KBM-7 (cell line): ENCODE measurements at regions of chr17 and their contacts with region 1.

Region 1: DNA sequence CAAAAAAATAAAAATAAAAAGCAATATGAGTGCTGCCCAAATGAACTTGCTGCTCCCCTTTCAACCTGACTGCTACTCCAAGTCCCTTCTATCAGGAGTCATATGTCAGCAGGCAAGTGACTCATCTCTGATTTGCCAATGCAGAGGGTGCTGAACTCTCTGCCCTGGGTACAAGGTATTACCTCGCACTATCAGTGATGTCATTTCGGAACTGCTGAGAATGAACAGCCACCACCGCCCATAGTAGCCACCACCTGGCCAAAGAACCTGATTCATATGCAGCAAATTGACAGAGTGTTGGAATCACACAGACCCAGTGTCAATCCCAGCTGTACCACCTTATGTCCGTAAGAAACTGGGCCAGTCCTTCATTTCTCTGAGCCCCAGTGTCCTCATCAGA is 31.2 kb downstream of the LYRM9 start:
- DNase-seq: no peak

Region 2: GRCh38 chr17:27654654-27655524 is 207.1 kb before region 1 on chr17:
- in situ Hi-C with region 1: loop called (anchors 25 kb)
- DNase-seq: peak; percentile 92

Region 3: GRCh38 chr17:27778193-27778592 is 83.8 kb before region 1 on chr17:
- in situ Hi-C with region 1: no loop called
- DNase-seq: no peak

Region 4: DNA sequence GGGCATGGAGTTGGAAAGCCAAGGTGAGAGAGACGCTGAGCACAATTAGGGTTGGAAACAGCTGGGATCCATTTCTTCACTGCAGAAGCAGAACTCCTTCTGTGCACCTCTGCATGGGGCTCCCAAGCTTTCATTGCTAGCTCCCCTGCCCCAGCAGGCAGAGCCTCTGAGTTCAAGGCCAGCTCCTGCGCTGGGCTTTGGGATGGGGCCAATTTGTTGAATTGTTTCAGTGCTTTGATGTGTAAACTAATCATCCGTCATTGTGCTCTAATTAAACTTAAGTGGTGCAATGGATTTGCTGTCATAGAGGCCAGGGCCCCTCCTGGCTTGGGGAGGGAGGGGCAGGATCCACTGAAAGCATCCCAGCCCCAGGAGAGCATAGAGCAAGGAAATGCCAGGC is 44.6 kb after region 1 on chr17:
- in situ Hi-C with region 1: no loop called
- DNase-seq: no peak

Region 5: GRCh38 chr17:28133562-28133970 is 271.6 kb after region 1 on chr17:
- in situ Hi-C with region 1: no loop called
- DNase-seq: no peak